ENCODE measurements at regions of chr12 and their contacts with region 1.

Region 1: DNA sequence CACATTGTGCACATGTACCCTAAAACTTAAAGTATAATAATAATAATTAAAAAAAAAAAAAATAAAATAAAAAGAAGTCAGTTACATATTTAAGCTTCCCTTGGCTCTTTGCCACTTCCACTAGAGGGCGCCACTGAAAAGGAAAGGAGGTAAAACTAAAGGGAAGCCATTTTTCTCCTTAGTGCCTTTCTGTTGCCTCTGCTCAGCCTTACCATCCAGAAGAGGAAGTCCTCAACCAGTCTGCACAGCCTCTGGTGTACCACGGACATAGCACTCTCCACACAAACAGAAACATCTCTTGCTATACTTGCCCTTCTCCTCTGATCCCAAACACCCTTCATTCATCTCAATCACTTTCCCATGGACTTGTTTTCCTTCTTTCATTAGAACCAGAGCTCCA is 169.0 kb upstream of the EEA1 start:
- DNase-seq: peak; percentile 84
- ATAC-seq: peak; percentile 87
- H3K4me3 Mint-ChIP-seq: no peak overlapping the region
- H3K27ac Mint-ChIP-seq: peak overlapping the region; percentile 51
- H3K4me1 Mint-ChIP-seq: peaks cover 21% of the 10 kb centered on the region
- H3K27me3 Mint-ChIP-seq: peaks cover 3% of the 10 kb centered on the region

Region 2: GRCh38 chr12:92784795-92785562 is 313.1 kb before region 1 on chr12:
- CTCF ChIA-PET with region 1: interaction called, 3 read pairs
- POLR2A ChIA-PET with region 1: no interaction called
- intact Hi-C with region 1: loop called in 1 of 2 experiments (anchors 10 kb)
- DNase-seq: peak; percentile 33
- ATAC-seq: peak; percentile 98
- H3K4me3 Mint-ChIP-seq: no peak overlapping the region
- H3K27ac Mint-ChIP-seq: no peak overlapping the region
- H3K4me1 Mint-ChIP-seq: peaks cover 2% of the 10 kb centered on the region
- H3K27me3 Mint-ChIP-seq: no peaks in the 10 kb centered on the region

Region 3: GRCh38 chr12:92859650-92860386 is 238.3 kb before region 1 on chr12:
- CTCF ChIA-PET with region 1: no interaction called
- POLR2A ChIA-PET with region 1: no interaction called
- intact Hi-C with region 1: no loop called
- DNase-seq: no peak
- ATAC-seq: no peak
- H3K4me3 Mint-ChIP-seq: no peak overlapping the region
- H3K27ac Mint-ChIP-seq: no peak overlapping the region
- H3K4me1 Mint-ChIP-seq: peaks cover 10% of the 10 kb centered on the region
- H3K27me3 Mint-ChIP-seq: no peaks in the 10 kb centered on the region

Region 4: DNA sequence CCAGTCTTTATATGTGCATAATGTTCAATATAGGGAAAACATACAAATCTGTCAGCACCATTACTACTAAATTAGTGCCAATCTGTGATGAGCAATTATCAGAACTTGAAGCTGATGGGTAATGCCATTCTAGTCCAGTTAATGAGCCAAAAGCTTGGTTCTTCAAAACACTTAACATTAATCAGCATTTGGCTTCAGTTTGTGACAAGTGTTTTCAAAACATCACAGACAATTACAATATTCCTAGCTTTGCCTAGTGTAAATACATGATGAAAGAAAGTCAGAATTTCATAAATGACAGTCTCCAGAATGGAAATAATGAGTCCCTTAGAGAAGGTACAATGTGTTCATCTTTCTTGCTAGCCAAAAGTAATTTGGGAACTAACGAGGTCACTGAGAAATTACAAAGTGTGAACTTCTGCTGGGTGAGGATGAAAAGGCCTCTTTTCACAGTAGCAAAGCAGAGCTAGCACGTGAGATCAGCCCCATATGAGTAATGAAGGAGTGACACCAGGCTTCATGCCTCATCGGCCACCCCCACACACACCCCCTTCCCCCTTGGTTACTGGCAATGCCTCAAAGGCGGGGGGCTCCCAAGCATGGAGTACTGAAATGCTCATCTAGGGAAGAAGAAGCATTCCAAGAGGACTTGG is 11.6 kb after region 1 on chr12:
- CTCF ChIA-PET with region 1: interaction called, 48 read pairs
- POLR2A ChIA-PET with region 1: no interaction called
- intact Hi-C with region 1: no loop called
- DNase-seq: peak; percentile 75
- ATAC-seq: peak; percentile 93
- H3K4me3 Mint-ChIP-seq: no peak overlapping the region
- H3K27ac Mint-ChIP-seq: peak overlapping the region; percentile 89
- H3K4me1 Mint-ChIP-seq: peaks cover 26% of the 10 kb centered on the region
- H3K27me3 Mint-ChIP-seq: no peaks in the 10 kb centered on the region

Region 5: DNA sequence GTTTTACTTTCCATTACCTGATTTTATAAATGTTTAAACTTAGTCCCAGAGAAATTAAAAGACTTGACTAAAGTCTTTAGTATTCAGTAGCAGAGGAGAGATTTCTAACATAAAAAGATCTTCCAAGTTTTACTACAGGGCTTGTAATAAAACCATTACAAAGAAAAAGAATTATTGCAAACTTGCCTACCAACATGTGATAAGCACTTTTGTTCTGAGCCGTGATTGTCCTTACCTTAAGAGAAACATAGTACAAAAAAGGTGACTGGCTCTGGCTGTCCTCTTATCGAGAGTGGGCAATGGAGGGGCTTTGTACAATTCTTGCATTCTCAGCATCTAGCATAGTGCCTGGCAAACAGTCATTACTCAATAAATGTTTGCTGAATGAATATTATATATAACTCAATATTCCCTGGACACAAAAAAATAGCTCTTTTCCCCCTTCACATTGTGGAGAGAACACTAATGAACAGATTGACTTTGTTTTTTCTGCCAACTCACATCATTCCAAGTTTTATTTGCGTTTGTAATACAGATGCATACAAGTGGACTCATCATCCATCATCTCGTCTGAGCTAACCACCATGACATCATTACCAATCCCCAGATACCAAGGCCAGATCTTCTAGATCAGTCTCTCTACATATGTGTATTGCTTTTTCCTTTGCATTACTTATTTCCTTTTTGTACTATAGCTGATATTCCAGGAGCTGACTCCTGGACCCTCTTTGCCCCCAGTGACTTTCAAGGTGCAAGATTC is 23.8 kb after region 1 on chr12:
- CTCF ChIA-PET with region 1: interaction called, 15 read pairs
- POLR2A ChIA-PET with region 1: no interaction called
- intact Hi-C with region 1: no loop called
- DNase-seq: no peak
- ATAC-seq: no peak
- H3K4me3 Mint-ChIP-seq: no peak overlapping the region
- H3K27ac Mint-ChIP-seq: no peak overlapping the region
- H3K4me1 Mint-ChIP-seq: no peaks in the 10 kb centered on the region
- H3K27me3 Mint-ChIP-seq: no peaks in the 10 kb centered on the region

Region 6: DNA sequence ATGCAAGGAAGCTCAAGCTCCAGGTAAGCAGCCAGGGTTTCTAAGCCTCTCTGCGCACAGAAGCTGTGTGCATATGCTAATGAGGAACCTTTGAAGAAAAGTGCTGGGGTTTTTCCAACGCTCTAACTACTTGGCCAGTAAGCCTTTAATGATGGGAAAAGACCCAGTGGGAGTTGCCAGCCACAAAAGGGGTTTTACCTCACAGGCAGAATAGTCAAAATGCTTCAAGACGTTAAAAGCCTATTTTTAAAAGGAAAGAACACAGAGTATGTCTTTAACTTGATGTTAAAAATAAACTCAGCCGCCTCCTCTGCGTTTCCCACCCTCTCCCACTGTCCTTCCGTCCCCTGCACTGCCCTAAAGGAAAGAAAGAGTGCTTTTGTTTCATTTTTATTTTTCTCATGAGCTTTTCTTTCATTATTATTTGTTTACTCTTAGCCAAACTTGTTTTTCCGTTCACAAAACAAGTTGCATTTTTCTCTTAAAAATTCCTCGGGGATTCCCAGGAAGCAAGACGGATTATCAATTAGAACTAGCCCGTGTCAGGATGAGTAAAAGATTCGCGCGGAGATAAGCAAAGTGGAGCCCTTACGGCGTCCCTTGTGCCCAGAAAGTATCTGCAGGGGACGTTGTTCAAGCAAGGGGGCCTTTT is 69.9 kb after region 1 on chr12:
- CTCF ChIA-PET with region 1: interaction called, 3 read pairs
- POLR2A ChIA-PET with region 1: no interaction called
- intact Hi-C with region 1: loop called in 1 of 2 experiments (anchors 5 kb)
- DNase-seq: peak; percentile 69
- ATAC-seq: peak; percentile 96
- H3K4me3 Mint-ChIP-seq: peak overlapping the region; percentile 61
- H3K27ac Mint-ChIP-seq: peak overlapping the region; percentile 62
- H3K4me1 Mint-ChIP-seq: peaks cover 12% of the 10 kb centered on the region
- H3K27me3 Mint-ChIP-seq: peaks cover 4% of the 10 kb centered on the region

Region 7: GRCh38 chr12:93243689-93244513 is 145.8 kb after region 1 on chr12:
- CTCF ChIA-PET with region 1: interaction called, 3 read pairs
- POLR2A ChIA-PET with region 1: no interaction called
- intact Hi-C with region 1: loop called in 1 of 2 experiments (anchors 10 kb)
- DNase-seq: peak; percentile 29
- ATAC-seq: peak; percentile 59
- H3K4me3 Mint-ChIP-seq: peak overlapping the region; percentile 50
- H3K27ac Mint-ChIP-seq: peak overlapping the region; percentile 75
- H3K4me1 Mint-ChIP-seq: peaks cover 33% of the 10 kb centered on the region
- H3K27me3 Mint-ChIP-seq: no peaks in the 10 kb centered on the region

Region 8: GRCh38 chr12:93363841-93364297 is 265.8 kb after region 1 on chr12:
- CTCF ChIA-PET with region 1: no interaction called
- POLR2A ChIA-PET with region 1: no interaction called
- intact Hi-C with region 1: no loop called
- DNase-seq: no peak
- ATAC-seq: peak; percentile 49
- H3K4me3 Mint-ChIP-seq: no peak overlapping the region
- H3K27ac Mint-ChIP-seq: no peak overlapping the region
- H3K4me1 Mint-ChIP-seq: peaks cover 10% of the 10 kb centered on the region
- H3K27me3 Mint-ChIP-seq: no peaks in the 10 kb centered on the region

Region 9: GRCh38 chr12:93397412-93397811 is 299.3 kb after region 1 on chr12:
- CTCF ChIA-PET with region 1: interaction called, 22 read pairs
- POLR2A ChIA-PET with region 1: no interaction called
- intact Hi-C with region 1: loop called in 1 of 2 experiments (anchors 1 kb)
- DNase-seq: no peak
- ATAC-seq: no peak
- H3K4me3 Mint-ChIP-seq: no peak overlapping the region
- H3K27ac Mint-ChIP-seq: no peak overlapping the region
- H3K4me1 Mint-ChIP-seq: peaks cover 4% of the 10 kb centered on the region
- H3K27me3 Mint-ChIP-seq: no peaks in the 10 kb centered on the region